Naive thymus-derived CD4-positive, alpha-beta T cell (primary cell): ENCODE measurements at regions of chr4 and their contacts with region 1.

Region 1: GRCh38 chr4:140153718-140154571 is at the start of gene MAML3:
- DNase-seq: peak; percentile 73 to 89 (median 83)
- ATAC-seq: peak; percentile 58
- H3K4me3 ChIP-seq: peak within 1 kb of the TSS; percentile 99
- H3K4me3 Mint-ChIP-seq: peak within 1 kb of the TSS; percentile 89 to 100 (median 96)
- H3K27ac ChIP-seq: peak within 1 kb of the TSS; percentile 84
- H3K27ac Mint-ChIP-seq: peak within 1 kb of the TSS; percentile 81 to 96 (median 93)
- H3K4me1 ChIP-seq: peaks cover 0 to 13% of the 10 kb centered on the region in 2 donors
- H3K4me1 Mint-ChIP-seq: peaks cover 4 to 47% (median 32%) of the 10 kb centered on the region in 7 donors
- H3K27me3 ChIP-seq: no peaks in the 10 kb centered on the region
- H3K27me3 Mint-ChIP-seq: peaks cover 0 to 75% (median 0%) of the 10 kb centered on the region in 5 donors
- total RNA-seq, gene MAML3: 1.4 to 9.4 (median 3.6) TPM

Region 2: GRCh38 chr4:139015269-139015947 is 1138.5 kb before region 1 on chr4 and contains the start of gene NOCT:
- CTCF ChIA-PET with region 1: no interaction called
- POLR2A ChIA-PET with region 1: no interaction called
- intact Hi-C with region 1: loop called in 1 of 2 experiments (anchors 1 kb)
- DNase-seq: peak; percentile 82 to 92 (median 89)
- ATAC-seq: peak; percentile 94
- H3K4me3 ChIP-seq: peak within 1 kb of the TSS; percentile 65
- H3K4me3 Mint-ChIP-seq: peak within 1 kb of the TSS; percentile 82 to 93 (median 88)
- H3K27ac ChIP-seq: peak within 1 kb of the TSS; percentile 91
- H3K27ac Mint-ChIP-seq: peak within 1 kb of the TSS; percentile 76 to 99 (median 94)
- H3K4me1 ChIP-seq: peaks cover 7 to 10% of the 10 kb centered on the region in 2 donors
- H3K4me1 Mint-ChIP-seq: peaks cover 14 to 44% (median 24%) of the 10 kb centered on the region in 7 donors
- H3K27me3 ChIP-seq: no peaks in the 10 kb centered on the region
- H3K27me3 Mint-ChIP-seq: no peaks in the 10 kb centered on the region
- total RNA-seq, gene NOCT: 1.6 to 33.7 (median 8.8) TPM

Region 3: DNA sequence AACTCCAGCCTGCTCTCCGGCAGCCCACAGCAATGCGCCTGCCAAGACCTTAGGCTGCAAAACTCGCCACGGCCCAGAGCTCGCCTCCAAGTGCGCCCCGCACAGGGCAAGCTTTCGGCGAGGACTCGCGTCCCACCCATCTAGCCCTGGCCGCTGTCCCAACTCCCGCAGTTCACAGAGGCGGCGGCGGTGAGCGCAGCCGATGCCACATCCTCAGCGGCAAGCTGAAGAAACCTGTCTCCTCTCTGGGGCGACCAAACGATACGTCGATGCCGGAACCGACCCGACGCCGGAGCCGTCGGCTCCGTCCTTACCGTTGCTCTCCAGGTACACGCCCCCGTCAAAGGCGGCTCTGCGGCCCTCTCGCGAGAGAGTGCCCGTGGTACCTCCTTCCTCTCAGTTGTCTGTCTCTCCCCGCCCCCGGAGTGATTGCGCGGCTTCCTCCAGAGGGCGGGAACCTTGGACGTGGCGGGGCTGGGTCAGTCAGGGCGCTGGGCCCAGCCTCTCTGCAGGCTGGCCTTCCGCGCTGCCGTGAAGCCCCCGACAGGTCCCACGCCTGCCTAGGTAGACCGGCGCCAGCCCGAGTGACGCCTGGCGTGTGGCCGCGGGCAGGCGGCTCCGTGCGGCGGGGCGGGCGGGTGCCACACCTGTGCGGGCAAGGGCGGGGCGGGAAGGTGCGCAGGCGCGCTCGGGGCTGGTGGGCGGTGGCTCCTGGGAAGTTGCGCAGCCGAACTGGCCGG is 700.4 kb before region 1 on chr4:
- CTCF ChIA-PET with region 1: no interaction called
- POLR2A ChIA-PET with region 1: no interaction called
- intact Hi-C with region 1: loop called in 1 of 2 experiments (anchors 2 kb)
- DNase-seq: peak; percentile 96 to 98 (median 98)
- ATAC-seq: peak; percentile 93
- H3K4me3 ChIP-seq: peak overlapping the region; percentile 97
- H3K4me3 Mint-ChIP-seq: peak overlapping the region; percentile 94 to 99 (median 97)
- H3K27ac ChIP-seq: peak overlapping the region; percentile 97
- H3K27ac Mint-ChIP-seq: peak overlapping the region; percentile 96 to 100 (median 99)
- H3K4me1 ChIP-seq: peaks cover 30 to 36% of the 10 kb centered on the region in 2 donors
- H3K4me1 Mint-ChIP-seq: peaks cover 38 to 82% (median 62%) of the 10 kb centered on the region in 7 donors
- H3K27me3 ChIP-seq: no peaks in the 10 kb centered on the region
- H3K27me3 Mint-ChIP-seq: no peaks in the 10 kb centered on the region

Region 4: GRCh38 chr4:139950568-139950967 is 203.4 kb before region 1 on chr4:
- CTCF ChIA-PET with region 1: no interaction called
- POLR2A ChIA-PET with region 1: no interaction called
- intact Hi-C with region 1: loop called in 1 of 2 experiments (anchors 1 kb)
- DNase-seq: peak in 1 of 9 donors; percentile 59
- ATAC-seq: peak; percentile 67
- H3K4me3 ChIP-seq: no peak overlapping the region
- H3K4me3 Mint-ChIP-seq: peak overlapping the region in 4 of 10 donors; percentile 4 to 60 (median 36)
- H3K27ac ChIP-seq: no peak overlapping the region
- H3K27ac Mint-ChIP-seq: peak overlapping the region in 4 of 9 donors; percentile 3 to 80 (median 20)
- H3K4me1 ChIP-seq: no peaks in the 10 kb centered on the region
- H3K4me1 Mint-ChIP-seq: peaks cover 12 to 38% (median 15%) of the 10 kb centered on the region in 7 donors
- H3K27me3 ChIP-seq: no peaks in the 10 kb centered on the region
- H3K27me3 Mint-ChIP-seq: peaks cover 0 to 5% (median 0%) of the 10 kb centered on the region in 5 donors

Region 5: GRCh38 chr4:140095694-140096482 is 58.1 kb before region 1 on chr4:
- CTCF ChIA-PET with region 1: interaction called, 3 read pairs
- POLR2A ChIA-PET with region 1: interaction called, 45 read pairs
- intact Hi-C with region 1: loop called (anchors 1 kb)
- DNase-seq: peak in 8 of 9 donors; percentile 46 to 92 (median 71)
- ATAC-seq: peak; percentile 73
- H3K4me3 ChIP-seq: peak overlapping the region; percentile 39
- H3K4me3 Mint-ChIP-seq: peak overlapping the region; percentile 68 to 97 (median 88)
- H3K27ac ChIP-seq: peak overlapping the region; percentile 73
- H3K27ac Mint-ChIP-seq: peak overlapping the region; percentile 90 to 99 (median 95)
- H3K4me1 ChIP-seq: peaks cover 5 to 53% of the 10 kb centered on the region in 2 donors
- H3K4me1 Mint-ChIP-seq: peaks cover 51 to 83% (median 75%) of the 10 kb centered on the region in 7 donors
- H3K27me3 ChIP-seq: no peaks in the 10 kb centered on the region
- H3K27me3 Mint-ChIP-seq: peaks cover 0 to 2% (median 0%) of the 10 kb centered on the region in 5 donors

Region 6: DNA sequence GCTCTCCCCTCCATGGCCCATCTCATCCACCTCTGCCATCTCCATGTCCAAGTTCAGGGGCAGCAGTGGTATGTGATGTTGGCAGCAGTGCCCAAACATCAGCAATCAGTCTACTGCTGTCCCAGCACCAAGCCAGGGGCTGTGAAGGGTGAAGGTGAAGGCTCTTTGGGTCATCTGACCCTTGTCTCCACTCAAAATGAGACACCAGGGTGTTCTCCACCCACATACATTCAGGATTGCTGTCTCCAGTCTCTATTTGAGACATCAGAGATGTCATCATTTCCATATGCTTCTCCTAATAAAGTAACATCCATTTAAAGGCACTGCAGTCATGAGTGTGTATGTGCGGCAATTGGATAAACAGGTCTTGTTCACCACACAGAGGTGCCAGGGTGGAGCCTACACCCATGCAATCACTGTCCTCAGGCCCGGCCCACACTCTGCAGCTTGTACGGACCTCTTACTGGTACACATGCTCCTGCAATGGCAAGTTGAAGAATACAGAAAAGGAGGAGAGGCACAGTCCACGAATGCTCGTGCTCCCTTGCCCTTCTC is 22.2 kb before region 1 on chr4:
- CTCF ChIA-PET with region 1: no interaction called
- POLR2A ChIA-PET with region 1: interaction called, 4 read pairs
- intact Hi-C with region 1: loop called in 1 of 2 experiments (anchors 1 kb)
- DNase-seq: no peak
- ATAC-seq: no peak
- H3K4me3 ChIP-seq: no peak overlapping the region
- H3K4me3 Mint-ChIP-seq: peak overlapping the region in 7 of 10 donors; percentile 8 to 77 (median 60)
- H3K27ac ChIP-seq: no peak overlapping the region
- H3K27ac Mint-ChIP-seq: peak overlapping the region in 3 of 9 donors; percentile 40 to 51 (median 46)
- H3K4me1 ChIP-seq: no peaks in the 10 kb centered on the region
- H3K4me1 Mint-ChIP-seq: peaks cover 1 to 19% (median 16%) of the 10 kb centered on the region in 7 donors
- H3K27me3 ChIP-seq: no peaks in the 10 kb centered on the region
- H3K27me3 Mint-ChIP-seq: peaks cover 0 to 54% (median 0%) of the 10 kb centered on the region in 5 donors

Region 7: GRCh38 chr4:140523857-140524742 is 370.2 kb after region 1 on chr4 and contains the start of gene ELMOD2:
- CTCF ChIA-PET with region 1: no interaction called
- POLR2A ChIA-PET with region 1: interaction called, 4 read pairs
- intact Hi-C with region 1: loop called (anchors 1 to 5 kb)
- DNase-seq: peak; percentile 95 to 98 (median 97)
- ATAC-seq: peak; percentile 100
- H3K4me3 ChIP-seq: peak within 1 kb of the TSS; percentile 70
- H3K4me3 Mint-ChIP-seq: peak within 1 kb of the TSS; percentile 78 to 95 (median 88)
- H3K27ac ChIP-seq: peak within 1 kb of the TSS; percentile 71
- H3K27ac Mint-ChIP-seq: peak within 1 kb of the TSS; percentile 78 to 93 (median 86)
- H3K4me1 ChIP-seq: peaks cover 12 to 18% of the 10 kb centered on the region in 2 donors
- H3K4me1 Mint-ChIP-seq: peaks cover 8 to 39% (median 29%) of the 10 kb centered on the region in 7 donors
- H3K27me3 ChIP-seq: no peaks in the 10 kb centered on the region
- H3K27me3 Mint-ChIP-seq: peaks cover 0 to 3% (median 0%) of the 10 kb centered on the region in 5 donors
- total RNA-seq, gene ELMOD2: 12.8 to 29.2 (median 17.7) TPM